Adrenal gland (tissue), 19 donors: ENCODE measurements at regions of chr11 and their contacts with region 1.

Region 1: DNA sequence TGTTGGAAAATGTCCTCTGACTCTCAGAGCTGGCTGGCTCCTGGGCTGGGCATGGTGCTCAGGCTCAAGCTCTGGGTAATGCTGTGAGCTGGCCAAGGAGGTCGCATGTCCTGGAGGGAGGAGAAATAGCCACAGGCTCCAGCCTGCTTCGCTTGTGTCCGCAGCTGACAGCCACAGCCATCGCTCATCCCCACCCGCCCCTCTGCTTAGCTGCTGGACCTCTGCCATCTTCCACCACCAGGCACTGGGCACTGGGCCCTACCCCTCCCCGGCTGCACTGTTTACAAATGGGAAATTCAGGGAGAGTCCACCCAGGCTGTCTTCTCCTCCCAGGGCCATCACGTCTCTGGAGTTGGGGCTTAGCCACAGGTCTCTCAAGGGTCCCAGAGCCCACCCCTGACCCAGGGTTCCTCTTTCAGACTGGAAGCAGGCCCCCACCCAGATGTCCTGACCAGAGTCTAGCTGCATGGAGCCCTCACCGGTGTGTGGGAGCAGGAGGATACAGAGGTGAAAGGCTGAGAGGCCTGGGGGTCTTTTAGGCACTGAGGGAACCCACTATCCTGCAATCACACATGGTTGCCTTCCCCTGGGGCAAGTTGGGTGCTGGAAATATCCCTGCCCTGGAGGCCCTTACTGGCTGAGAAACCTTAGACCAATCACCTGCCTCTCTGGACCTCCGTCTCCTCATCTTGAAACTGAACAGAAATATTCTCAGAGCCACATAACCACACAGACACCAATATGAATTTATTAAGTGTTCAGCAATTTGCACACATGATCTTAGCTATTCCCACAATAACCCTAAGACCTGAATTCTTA is 62.7 kb downstream of the CD82 start:
- DNase-seq: peak; percentile 91 to 96 (median 92)
- H3K4me3 ChIP-seq: no peak overlapping the region
- H3K27ac ChIP-seq: peak overlapping the region in 4 of 5 donors; percentile 6 to 61 (median 24)
- H3K4me1 ChIP-seq: peaks cover 6 to 8% of the 10 kb centered on the region in 2 donors
- H3K27me3 ChIP-seq: no peaks in the 10 kb centered on the region
- CTCF ChIP-seq: peak in 3 of 6 experiments; percentile 20 to 39 (median 35)
- POLR2A ChIP-seq: peak in 1 of 2 donors; percentile 35

Region 2: DNA sequence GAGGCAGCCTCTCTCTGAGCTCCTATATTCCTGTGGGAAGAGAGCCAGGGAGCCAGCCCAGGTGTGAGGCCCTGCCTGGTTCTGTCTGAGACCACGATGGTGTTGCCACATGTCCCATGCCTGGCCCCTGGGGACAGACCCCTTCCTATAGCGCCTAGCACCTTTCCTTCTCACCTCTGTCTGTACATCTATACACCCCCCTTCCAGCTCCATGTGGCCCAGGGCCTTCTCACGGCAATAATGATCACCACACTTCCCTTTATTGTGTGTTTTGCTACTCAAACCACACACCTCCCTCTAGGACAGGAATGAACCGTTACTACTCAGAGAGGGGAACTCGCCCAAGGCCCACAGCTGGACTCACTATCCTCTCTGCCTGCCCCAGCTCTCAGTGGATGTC is 49.8 kb before region 1 on chr11:
- intact Hi-C with region 1: no loop called
- DNase-seq: no peak
- H3K4me3 ChIP-seq: no peak overlapping the region
- H3K27ac ChIP-seq: no peak overlapping the region
- H3K4me1 ChIP-seq: no peaks in the 10 kb centered on the region
- H3K27me3 ChIP-seq: no peaks in the 10 kb centered on the region
- CTCF ChIP-seq: no peak
- POLR2A ChIP-seq: no peak

Region 3: DNA sequence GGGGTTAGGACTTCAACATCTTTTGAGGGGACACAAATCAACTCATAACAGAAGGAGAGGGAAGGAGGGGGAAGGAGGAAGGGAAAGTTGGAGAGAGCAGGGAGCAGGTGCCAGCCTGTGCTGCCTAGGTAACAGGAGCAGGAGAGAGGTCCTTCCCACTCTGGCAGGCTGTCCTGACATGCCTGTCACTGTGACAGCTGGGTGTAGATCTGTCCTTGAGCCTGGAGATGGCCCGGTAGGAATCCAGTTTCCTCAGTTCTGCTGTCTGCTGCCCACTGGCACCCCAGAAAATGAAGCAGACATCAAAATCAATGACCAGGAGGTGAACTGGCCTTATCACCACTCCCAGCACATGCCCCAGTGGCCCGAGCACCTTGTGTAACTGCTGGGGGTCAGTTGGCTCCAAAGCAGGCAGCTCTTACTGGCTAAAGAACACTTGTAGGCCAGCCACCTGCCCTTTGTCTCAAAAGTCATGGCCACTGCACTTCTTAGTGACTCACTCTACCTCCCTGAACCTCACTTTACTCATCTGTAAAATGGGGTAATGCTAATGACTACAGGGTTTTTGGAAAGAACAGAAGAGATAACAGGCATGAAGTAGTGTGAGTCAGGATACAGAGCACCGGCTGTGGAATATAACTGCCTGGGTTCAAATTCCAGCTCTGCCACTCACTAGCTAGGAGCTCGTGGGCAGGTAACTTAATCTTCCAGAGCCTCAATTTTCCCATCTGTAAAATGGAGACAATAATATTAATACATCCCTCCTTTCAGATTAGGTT is 90.7 kb after region 1 on chr11:
- intact Hi-C with region 1: loop called in 1 of 2 experiments (anchors 5 kb)
- DNase-seq: peak in 3 of 7 donors; percentile 29 to 71 (median 62)
- H3K4me3 ChIP-seq: no peak overlapping the region
- H3K27ac ChIP-seq: peak overlapping the region in 1 of 5 donors; percentile 46
- H3K4me1 ChIP-seq: peaks cover 10 to 12% of the 10 kb centered on the region in 2 donors
- H3K27me3 ChIP-seq: no peaks in the 10 kb centered on the region
- CTCF ChIP-seq: no peak
- POLR2A ChIP-seq: no peak

Region 4: DNA sequence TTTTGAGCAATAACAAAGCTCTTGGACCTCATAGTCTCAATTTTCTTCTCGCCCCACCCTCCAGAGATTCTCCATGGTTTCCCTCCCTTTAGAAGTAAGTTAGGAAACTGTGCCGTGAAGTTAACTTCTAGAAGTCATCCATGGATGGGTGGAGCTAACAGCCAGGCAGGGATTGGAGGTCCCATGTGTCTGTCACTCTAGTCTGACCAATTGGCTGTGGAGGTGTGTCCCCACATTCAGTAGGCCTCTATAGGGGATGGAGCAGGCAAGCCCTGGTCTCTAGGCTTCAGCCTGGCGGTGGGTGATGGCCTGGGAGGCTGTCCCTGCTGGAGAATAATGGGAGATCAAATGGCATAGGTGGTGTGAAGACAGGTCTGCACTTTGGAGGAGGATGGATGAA is 271.8 kb after region 1 on chr11:
- intact Hi-C with region 1: loop called (anchors 5 kb)
- DNase-seq: peak in 5 of 7 donors; percentile 30 to 73 (median 50)
- H3K4me3 ChIP-seq: no peak overlapping the region
- H3K27ac ChIP-seq: no peak overlapping the region
- H3K4me1 ChIP-seq: peaks cover 0 to 11% of the 10 kb centered on the region in 2 donors
- H3K27me3 ChIP-seq: no peaks in the 10 kb centered on the region
- CTCF ChIP-seq: no peak
- POLR2A ChIP-seq: no peak